ENCODE measurements at regions of chr2 and their contacts with region 1.

Region 1: DNA sequence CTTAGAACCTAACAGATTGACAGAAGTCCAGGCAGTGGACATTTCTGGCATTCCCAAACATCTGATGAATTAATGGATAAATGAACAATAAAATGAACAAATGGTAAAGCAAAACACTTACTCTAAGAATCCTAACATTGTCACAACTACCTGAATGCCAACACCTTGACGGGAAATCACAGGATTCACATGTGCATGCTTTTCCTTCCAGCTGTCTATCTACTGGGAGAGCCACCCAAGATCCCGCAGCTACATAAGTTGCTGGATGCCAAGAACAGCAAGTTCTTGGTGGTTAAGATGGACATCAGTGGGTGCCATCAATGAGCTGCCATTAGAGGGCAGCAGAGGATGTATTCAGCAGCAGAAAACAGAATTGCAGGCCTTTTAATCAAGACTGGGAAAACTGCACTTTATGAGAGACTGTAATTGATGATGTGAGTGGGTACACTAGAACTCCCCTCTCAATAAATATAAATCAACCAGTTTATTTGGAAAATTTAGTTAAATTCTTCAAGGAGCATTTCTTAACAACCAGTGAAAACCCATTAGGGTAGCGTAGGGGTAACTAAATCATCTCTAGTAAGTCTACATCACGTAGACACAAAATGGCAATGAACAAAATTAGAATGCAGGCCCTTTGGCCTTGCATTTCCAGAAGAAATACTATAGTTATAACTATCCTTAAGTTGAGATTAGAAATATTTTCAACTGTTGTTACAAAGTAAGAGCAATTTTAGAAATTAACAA is 45.6 kb downstream of the SESTD1 start:
- DNase-seq: peak; percentile 83
- H3K4me3 Mint-ChIP-seq: no peak overlapping the region
- H3K27ac Mint-ChIP-seq: no peak overlapping the region
- H3K4me1 Mint-ChIP-seq: peaks cover 25% of the 10 kb centered on the region
- H3K27me3 Mint-ChIP-seq: no peaks in the 10 kb centered on the region
- CTCF ChIP-seq: peak; percentile 69

Region 2: GRCh38 chr2:179181002-179181401 is 38.0 kb before region 1 on chr2:
- CTCF ChIA-PET with region 1: no interaction called
- POLR2A ChIA-PET with region 1: no interaction called
- intact Hi-C with region 1: no loop called
- DNase-seq: no peak
- H3K4me3 Mint-ChIP-seq: no peak overlapping the region
- H3K27ac Mint-ChIP-seq: no peak overlapping the region
- H3K4me1 Mint-ChIP-seq: peaks cover 13% of the 10 kb centered on the region
- H3K27me3 Mint-ChIP-seq: no peaks in the 10 kb centered on the region
- CTCF ChIP-seq: no peak

Region 3: DNA sequence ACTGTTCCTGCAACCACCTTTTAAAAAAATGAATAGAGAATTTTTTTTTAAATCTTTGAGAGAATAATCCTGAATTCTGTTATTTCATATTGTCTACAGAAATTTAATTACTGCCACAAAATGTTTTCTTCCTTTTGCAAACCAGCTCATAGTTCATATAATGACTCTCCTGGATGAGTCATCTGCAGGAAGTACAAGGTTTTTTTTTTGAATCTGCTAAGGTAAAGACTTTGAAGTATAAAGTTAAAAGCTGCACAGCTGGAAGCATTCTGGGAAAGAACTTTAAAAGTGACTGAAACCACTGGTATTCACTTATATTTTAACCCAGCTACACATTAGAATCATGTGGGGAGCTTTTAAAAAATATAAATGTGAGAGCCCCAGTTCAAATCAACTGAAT is 20.2 kb after region 1 on chr2:
- CTCF ChIA-PET with region 1: interaction called, 10 read pairs
- POLR2A ChIA-PET with region 1: interaction called, 5 read pairs
- intact Hi-C with region 1: no loop called
- DNase-seq: peak; percentile 57
- H3K4me3 Mint-ChIP-seq: no peak overlapping the region
- H3K27ac Mint-ChIP-seq: no peak overlapping the region
- H3K4me1 Mint-ChIP-seq: peaks cover 49% of the 10 kb centered on the region
- H3K27me3 Mint-ChIP-seq: no peaks in the 10 kb centered on the region
- CTCF ChIP-seq: no peak

Region 4: GRCh38 chr2:179272406-179273192 is 53.6 kb after region 1 on chr2:
- CTCF ChIA-PET with region 1: interaction called, 3 read pairs
- POLR2A ChIA-PET with region 1: interaction called, 7 read pairs
- intact Hi-C with region 1: loop called (anchors 1 kb)
- DNase-seq: peak; percentile 88
- H3K4me3 Mint-ChIP-seq: peak overlapping the region; percentile 39
- H3K27ac Mint-ChIP-seq: peak overlapping the region; percentile 95
- H3K4me1 Mint-ChIP-seq: peaks cover 57% of the 10 kb centered on the region
- H3K27me3 Mint-ChIP-seq: no peaks in the 10 kb centered on the region
- CTCF ChIP-seq: no peak

Region 5: DNA sequence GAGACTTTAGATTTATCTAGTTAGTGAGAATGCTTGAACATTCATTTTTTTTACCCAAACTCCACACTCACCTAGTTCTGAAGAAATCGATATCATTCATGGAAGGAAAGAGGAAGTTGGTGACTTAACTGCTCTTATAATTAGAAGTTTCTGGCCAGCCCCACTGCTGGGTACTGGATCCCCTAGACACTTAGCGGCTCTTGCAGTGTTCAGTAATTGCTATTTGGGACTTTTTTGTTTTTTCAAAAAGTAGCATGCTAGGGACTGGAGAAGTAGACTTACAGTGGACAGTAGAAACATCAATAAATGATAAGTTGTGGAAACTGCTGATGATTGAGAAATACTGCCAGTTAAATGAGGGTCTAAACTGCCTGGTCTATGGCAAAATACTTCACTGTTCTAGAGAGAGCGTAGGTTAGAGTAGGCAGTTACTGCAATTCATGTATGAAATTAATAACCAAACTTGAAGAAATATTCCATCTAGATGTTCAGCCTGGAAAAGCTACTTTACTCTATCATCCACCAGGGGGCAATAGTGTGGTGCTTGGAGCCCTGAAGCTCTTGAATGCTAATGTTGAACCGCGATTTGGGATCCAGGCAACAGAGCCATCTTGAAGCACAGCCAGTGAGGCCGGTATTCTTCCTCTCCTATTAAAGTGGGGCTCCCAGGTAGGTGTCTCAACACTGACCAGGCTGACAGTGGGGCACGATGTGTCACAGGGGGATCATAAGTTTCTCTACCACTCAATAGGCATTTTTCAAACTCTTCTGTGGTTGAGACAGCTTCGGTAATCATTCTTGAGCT is 191.7 kb after region 1 on chr2:
- CTCF ChIA-PET with region 1: interaction called, 7 read pairs
- POLR2A ChIA-PET with region 1: interaction called, 3 read pairs
- intact Hi-C with region 1: loop called (anchors 1 kb)
- DNase-seq: peak; percentile 79
- H3K4me3 Mint-ChIP-seq: no peak overlapping the region
- H3K27ac Mint-ChIP-seq: no peak overlapping the region
- H3K4me1 Mint-ChIP-seq: no peaks in the 10 kb centered on the region
- H3K27me3 Mint-ChIP-seq: no peaks in the 10 kb centered on the region
- CTCF ChIP-seq: peak; percentile 52

Region 6: DNA sequence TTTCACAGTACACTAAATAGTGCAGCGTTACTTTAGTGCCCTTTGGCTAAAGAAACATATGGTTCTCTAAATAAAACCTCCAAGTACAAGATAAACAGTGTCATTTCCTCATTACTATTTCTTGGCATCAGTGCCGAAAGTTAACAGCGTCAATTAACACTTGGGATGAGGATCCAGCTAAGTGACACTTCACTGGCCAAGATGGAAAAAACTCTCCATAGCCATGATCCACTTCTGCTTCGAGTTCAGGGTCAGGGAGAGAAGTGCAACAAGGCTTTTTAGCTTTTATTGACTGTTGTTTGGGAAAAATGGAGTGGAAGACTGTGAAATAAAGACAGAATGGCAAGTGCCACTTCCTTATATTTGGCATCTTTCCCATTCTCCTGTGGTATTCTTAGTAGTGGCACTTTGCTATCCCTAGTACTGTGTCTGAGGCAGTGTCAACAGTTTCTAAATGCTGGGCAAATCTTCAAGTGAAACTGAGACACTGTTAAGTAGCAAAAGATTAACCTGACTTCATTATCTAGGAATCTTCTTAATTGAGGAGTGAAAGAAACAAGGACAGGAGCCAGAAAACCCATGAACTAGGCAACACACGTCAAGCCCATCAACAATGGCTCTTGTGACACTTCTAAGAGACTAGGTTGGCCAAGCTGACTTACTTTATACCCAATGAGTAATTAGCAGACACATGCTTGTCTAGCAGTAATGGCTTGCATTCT is 268.1 kb after region 1 on chr2:
- CTCF ChIA-PET with region 1: no interaction called
- POLR2A ChIA-PET with region 1: no interaction called
- intact Hi-C with region 1: no loop called
- DNase-seq: no peak
- H3K4me3 Mint-ChIP-seq: no peak overlapping the region
- H3K27ac Mint-ChIP-seq: no peak overlapping the region
- H3K4me1 Mint-ChIP-seq: no peaks in the 10 kb centered on the region
- H3K27me3 Mint-ChIP-seq: no peaks in the 10 kb centered on the region
- CTCF ChIP-seq: no peak

Region 7: GRCh38 chr2:179751163-179751809 is 532.3 kb after region 1 on chr2:
- CTCF ChIA-PET with region 1: interaction called, 3 read pairs
- POLR2A ChIA-PET with region 1: no interaction called
- intact Hi-C with region 1: loop called (anchors 1 kb)
- DNase-seq: peak; percentile 32
- H3K4me3 Mint-ChIP-seq: no peak overlapping the region
- H3K27ac Mint-ChIP-seq: no peak overlapping the region
- H3K4me1 Mint-ChIP-seq: peaks cover 26% of the 10 kb centered on the region
- H3K27me3 Mint-ChIP-seq: no peaks in the 10 kb centered on the region
- CTCF ChIP-seq: peak; percentile 66